Calu3 (cell line): ENCODE measurements at regions of chr18 and their contacts with region 1.

Region 1: DNA sequence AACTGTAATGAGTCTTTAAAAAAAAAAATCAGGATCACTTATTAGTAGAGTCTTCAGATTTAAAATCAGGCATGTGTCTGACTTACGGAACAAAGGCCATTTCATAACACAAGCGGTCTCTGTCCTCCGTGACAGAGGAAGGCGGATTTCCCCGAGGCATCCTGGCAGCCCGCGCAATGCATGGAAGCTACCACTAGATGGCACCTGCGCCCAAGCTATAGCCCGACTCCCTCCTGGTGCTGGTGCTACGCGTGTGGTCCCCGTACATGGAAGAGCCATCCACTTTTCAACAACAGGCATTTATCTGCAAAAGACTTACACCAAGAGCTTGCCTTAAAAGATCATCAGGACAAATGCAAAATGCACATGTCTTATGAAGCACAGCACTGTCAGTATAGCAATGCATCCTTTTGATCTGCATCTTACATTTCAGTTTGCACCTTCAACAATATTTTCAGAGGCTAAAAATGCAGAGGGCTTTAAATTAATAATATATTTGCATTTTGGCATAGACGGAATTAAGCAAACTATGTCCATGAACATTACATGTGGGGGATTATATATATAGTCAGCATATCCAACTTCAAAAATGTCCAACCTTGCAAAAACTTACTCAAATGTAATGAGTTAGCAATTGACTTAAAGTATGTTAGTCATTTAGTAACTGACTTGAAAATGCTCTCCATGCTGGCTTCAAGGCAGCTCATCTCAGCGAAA is 96.0 kb downstream of the ZNF516 start:
- DNase-seq: peak; percentile 77
- H3K4me3 Mint-ChIP-seq: no peak overlapping the region
- H3K27ac Mint-ChIP-seq: no peak overlapping the region
- H3K4me1 Mint-ChIP-seq: peaks cover 5% of the 10 kb centered on the region
- H3K27me3 Mint-ChIP-seq: no peaks in the 10 kb centered on the region
- CTCF ChIP-seq: peak; percentile 87

Region 2: DNA sequence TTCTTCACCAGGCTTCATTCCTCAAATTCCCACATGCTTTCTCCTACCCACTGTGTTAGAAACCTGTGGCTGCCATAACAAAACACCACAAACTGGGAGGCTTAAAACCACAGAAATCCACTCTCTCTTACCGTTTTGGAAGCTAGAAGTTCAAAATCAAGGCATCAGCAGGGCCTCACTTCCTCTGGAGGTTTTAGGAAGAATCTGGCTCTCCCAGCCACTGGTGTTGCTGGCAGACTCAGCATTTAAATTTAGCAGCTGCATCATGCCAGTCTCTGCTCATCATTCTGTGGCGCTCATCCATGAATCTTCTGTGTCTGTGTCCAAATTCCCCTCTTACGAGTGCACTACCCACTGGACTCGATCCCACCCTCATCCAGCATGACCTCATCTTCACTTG is 152.5 kb before region 1 on chr18:
- CTCF ChIA-PET with region 1: no interaction called
- intact Hi-C with region 1: no loop called
- DNase-seq: no peak
- H3K4me3 Mint-ChIP-seq: no peak overlapping the region
- H3K27ac Mint-ChIP-seq: no peak overlapping the region
- H3K4me1 Mint-ChIP-seq: no peaks in the 10 kb centered on the region
- H3K27me3 Mint-ChIP-seq: no peaks in the 10 kb centered on the region
- CTCF ChIP-seq: no peak

Region 3: GRCh38 chr18:76686737-76687262 is 287.7 kb after region 1 on chr18:
- CTCF ChIA-PET with region 1: interaction called, 6 read pairs
- intact Hi-C with region 1: loop called (anchors 1 kb)
- DNase-seq: peak; percentile 67
- H3K4me3 Mint-ChIP-seq: peak overlapping the region; percentile 41
- H3K27ac Mint-ChIP-seq: peak overlapping the region; percentile 69
- H3K4me1 Mint-ChIP-seq: peaks cover 18% of the 10 kb centered on the region
- H3K27me3 Mint-ChIP-seq: peaks cover 37% of the 10 kb centered on the region
- CTCF ChIP-seq: peak; percentile 56

Region 4: GRCh38 chr18:76697441-76697901 is 298.4 kb after region 1 on chr18:
- CTCF ChIA-PET with region 1: no interaction called
- intact Hi-C with region 1: no loop called
- DNase-seq: no peak
- H3K4me3 Mint-ChIP-seq: no peak overlapping the region
- H3K27ac Mint-ChIP-seq: no peak overlapping the region
- H3K4me1 Mint-ChIP-seq: peaks cover 6% of the 10 kb centered on the region
- H3K27me3 Mint-ChIP-seq: peaks cover 29% of the 10 kb centered on the region
- CTCF ChIP-seq: no peak

Region 5: DNA sequence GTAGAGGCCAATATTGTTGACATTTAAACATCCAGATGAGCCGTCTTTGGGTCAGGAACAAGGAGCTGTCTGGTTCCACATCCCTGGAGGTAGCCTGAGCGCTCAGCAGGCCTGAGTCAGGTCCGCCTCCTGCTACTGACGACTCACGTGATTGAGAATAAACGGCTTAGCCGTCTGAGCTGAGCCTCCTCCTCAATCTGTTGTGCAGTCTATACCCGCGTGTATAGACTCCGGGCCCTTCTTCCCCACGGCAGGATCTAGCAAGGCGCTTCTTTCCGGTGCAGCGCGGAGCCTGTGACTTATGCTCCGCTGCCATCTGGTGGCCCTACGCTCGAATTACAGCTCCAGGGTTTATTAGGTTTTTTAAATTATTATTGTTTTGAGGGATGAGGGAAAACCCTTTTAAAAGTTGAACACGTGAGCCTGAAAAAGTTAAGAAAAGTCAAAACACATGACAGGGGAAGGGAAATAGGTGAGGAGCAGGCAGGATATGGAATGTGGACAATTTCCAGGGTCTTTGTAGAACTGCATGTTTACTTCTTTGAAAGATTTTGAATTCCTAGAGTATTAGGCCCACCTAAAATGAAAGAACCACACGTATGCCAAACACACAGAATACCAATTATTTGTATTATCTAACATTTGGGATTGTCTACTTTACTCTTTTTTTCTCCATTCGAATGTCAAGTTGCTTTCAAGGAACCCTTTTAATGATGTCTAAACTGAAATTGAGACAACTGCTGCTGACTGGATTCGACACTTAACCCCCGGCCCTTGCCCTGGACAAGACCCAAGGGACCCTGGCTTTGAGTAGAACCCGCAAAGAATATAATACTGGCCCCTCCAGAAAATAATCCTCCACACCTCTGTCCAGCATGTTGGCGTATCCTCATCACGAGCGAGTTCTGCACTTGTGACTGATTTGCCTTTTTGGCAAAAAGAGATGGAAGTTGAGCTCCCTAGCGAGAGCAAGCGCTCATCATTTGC is 310.9 kb after region 1 on chr18:
- CTCF ChIA-PET with region 1: interaction called, 11 read pairs
- intact Hi-C with region 1: loop called (anchors 2 kb)
- DNase-seq: peak; percentile 42
- H3K4me3 Mint-ChIP-seq: no peak overlapping the region
- H3K27ac Mint-ChIP-seq: no peak overlapping the region
- H3K4me1 Mint-ChIP-seq: no peaks in the 10 kb centered on the region
- H3K27me3 Mint-ChIP-seq: peaks cover 11% of the 10 kb centered on the region
- CTCF ChIP-seq: peak; percentile 91

Region 6: DNA sequence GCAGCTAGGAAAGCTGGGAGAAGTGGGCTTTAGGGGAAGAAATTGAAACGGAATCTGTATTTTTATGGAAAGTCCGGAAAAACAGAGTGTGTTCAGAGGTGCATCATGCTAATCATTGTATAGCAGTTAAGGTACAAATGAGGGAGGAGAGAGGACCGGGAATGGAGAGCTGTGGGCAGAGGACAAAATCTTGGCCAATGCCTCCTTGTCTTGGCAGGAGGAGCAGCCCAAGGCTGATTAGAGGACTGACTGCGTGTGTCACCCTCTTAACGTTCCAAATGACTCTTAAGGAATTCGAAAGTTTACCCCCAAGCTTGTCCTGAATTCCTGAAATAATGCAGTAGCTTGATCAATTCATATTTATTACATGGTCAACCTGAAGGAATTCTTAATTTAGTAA is 504.3 kb after region 1 on chr18:
- CTCF ChIA-PET with region 1: no interaction called
- intact Hi-C with region 1: no loop called
- DNase-seq: no peak
- H3K4me3 Mint-ChIP-seq: no peak overlapping the region
- H3K27ac Mint-ChIP-seq: no peak overlapping the region
- H3K4me1 Mint-ChIP-seq: no peaks in the 10 kb centered on the region
- H3K27me3 Mint-ChIP-seq: no peaks in the 10 kb centered on the region
- CTCF ChIP-seq: no peak